Panc1 (cell line): ENCODE measurements at regions of chr3 and their contacts with region 1.

Region 1: GRCh38 chr3:114152519-114153151 is 26.2 kb downstream of the DRD3 start:
- DNase-seq: peak; percentile 39
- ATAC-seq: peak; percentile 90
- H3K4me3 ChIP-seq: peak overlapping the region; percentile 42 to 64
- H3K27ac ChIP-seq: no peak overlapping the region
- H3K4me1 ChIP-seq: 0 out of 2 replicates have a peak, but pooled peaks cover 5% of the 10 kb centered on the region
- H3K27me3 ChIP-seq: peaks cover 13% of the 10 kb centered on the region; the same call in 1 of the 2 replicates
- CTCF ChIP-seq: peak; percentile 97

Region 2: GRCh38 chr3:113086560-113087461 is 1065.8 kb before region 1 on chr3:
- CTCF ChIA-PET with region 1: interaction called, 11 read pairs
- POLR2A ChIA-PET with region 1: no interaction called
- in situ Hi-C with region 1: no loop called
- intact Hi-C with region 1: no loop called
- DNase-seq: no peak
- ATAC-seq: no peak
- H3K4me3 ChIP-seq: no peak overlapping the region
- H3K27ac ChIP-seq: no peak overlapping the region
- H3K4me1 ChIP-seq: no peaks in the 10 kb centered on the region
- H3K27me3 ChIP-seq: peaks cover 2% of the 10 kb centered on the region
- CTCF ChIP-seq: no peak

Region 3: DNA sequence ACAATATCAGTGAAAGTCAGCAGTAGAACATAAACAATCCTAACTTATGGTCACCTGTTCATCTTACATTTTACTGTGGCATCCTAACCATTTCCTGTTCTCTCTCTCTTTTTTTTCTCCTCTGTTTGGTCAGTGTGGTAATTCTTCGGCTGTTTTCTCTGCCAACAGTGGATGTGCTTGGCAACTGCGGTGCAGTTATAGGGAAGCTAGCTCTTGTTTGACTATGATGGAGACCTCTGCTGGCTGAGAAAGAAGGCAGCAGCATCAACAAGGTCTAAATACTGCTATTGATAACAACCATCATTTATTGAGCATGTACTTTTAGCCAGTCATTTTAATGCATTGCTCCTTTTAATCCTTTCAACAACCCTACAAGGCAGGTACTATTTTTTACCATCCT is 26.9 kb after region 1 on chr3:
- CTCF ChIA-PET with region 1: interaction called, 4 read pairs
- POLR2A ChIA-PET with region 1: no interaction called
- in situ Hi-C with region 1: no loop called
- intact Hi-C with region 1: loop called (anchors 2 kb)
- DNase-seq: peak; percentile 5
- ATAC-seq: peak; percentile 76; the same call in 1 of the 2 replicates
- H3K4me3 ChIP-seq: no peak overlapping the region
- H3K27ac ChIP-seq: no peak overlapping the region
- H3K4me1 ChIP-seq: no peaks in the 10 kb centered on the region
- H3K27me3 ChIP-seq: peaks cover 4% of the 10 kb centered on the region; the same call in 1 of the 2 replicates
- CTCF ChIP-seq: peak; percentile 68

Region 4: DNA sequence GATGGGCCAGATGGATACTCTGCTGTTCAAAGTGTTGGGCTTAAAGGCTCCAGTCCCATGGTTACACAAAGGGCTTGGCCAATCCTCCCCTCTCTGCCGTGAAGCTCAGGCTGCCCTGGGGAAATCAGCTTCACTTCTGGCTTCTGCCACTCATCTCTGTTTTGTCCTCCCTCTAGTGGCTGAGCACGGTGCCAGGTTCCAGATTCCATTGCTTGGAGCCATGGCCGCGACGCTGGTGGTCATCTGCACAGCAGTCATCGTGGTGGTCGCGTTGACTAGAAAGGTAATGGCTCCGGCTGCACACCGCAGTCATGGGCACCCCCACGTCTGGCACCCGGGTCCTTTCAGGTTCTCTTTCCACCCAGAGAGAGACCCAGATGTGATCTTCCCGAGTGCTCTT is 146.8 kb after region 1 on chr3:
- CTCF ChIA-PET with region 1: no interaction called
- POLR2A ChIA-PET with region 1: no interaction called
- in situ Hi-C with region 1: no loop called
- intact Hi-C with region 1: loop called (anchors 5 kb)
- DNase-seq: no peak
- ATAC-seq: peak; percentile 84
- H3K4me3 ChIP-seq: no peak overlapping the region
- H3K27ac ChIP-seq: no peak overlapping the region
- H3K4me1 ChIP-seq: no peaks in the 10 kb centered on the region
- H3K27me3 ChIP-seq: no peaks in the 10 kb centered on the region; the same call in 1 of the 2 replicates
- CTCF ChIP-seq: peak; percentile 76